ENCODE measurements at regions of chr19 and their contacts with region 1.

Region 1: DNA sequence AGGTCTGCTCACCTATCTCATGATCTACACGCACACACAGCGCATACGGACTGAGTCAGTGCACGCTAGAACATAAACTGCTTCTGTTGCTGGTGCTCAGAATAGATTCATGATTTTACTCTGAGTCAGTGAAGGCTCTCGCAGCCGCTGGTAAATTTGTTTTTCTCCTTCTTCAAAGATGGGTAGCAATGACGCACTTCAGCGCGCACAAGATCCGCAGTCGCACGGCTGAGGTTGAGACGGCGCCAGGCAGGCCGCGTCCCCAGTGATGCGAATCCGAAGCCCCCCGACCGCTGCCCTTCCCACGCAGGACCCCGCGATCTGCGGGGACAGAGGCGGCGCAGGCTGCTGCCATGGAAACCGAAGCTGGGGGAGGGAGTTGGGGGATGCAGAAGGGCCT is 103.7 kb upstream of the USP29 start:
- DNase-seq: no peak
- H3K4me3 ChIP-seq: no peak overlapping the region
- H3K27ac ChIP-seq: no peak overlapping the region
- H3K4me1 ChIP-seq: no peaks in the 10 kb centered on the region
- H3K27me3 ChIP-seq: no peaks in the 10 kb centered on the region
- CTCF ChIP-seq: no peak
- POLR2A ChIP-seq: no peak

Region 2: GRCh38 chr19:56839652-56840459 is 176.2 kb before region 1 on chr19:
- intact Hi-C with region 1: loop called in 1 of 2 experiments (anchors 10 kb)
- DNase-seq: peak; percentile 92 to 99 (median 98)
- H3K4me3 ChIP-seq: peak overlapping the region in 3 of 4 donors; percentile 13 to 68 (median 46)
- H3K27ac ChIP-seq: peak overlapping the region; percentile 3 to 94 (median 78)
- H3K4me1 ChIP-seq: peaks cover 0 to 16% of the 10 kb centered on the region in 2 donors
- H3K27me3 ChIP-seq: no peaks in the 10 kb centered on the region
- CTCF ChIP-seq: no peak
- POLR2A ChIP-seq: peak in 1 of 2 donors; percentile 48